Heart left ventricle (tissue), 16 donors: ENCODE measurements at regions of chr10 and their contacts with region 1.

Region 1: DNA sequence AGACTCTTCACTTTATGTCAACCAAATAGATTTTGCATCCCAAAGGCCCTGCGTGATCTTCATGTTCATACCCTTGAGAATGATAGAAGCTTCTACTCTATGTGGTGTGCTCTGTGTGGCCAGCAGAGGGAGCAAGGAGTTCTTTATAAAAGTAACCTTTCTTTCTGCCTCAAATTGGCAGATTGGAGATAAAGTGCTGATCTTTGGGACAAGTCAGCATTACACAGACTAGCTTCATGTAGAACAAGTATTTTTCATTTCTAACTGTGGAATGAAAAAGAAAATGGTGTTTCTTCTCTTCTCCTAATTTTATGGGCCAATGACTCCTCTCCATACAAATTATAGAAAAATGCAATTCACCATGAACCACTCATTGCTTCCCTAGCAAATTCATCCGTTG is 1214.1 kb downstream of the SORCS1 start:
- DNase-seq: peak in 3 of 5 donors; percentile 23 to 39 (median 29)
- ATAC-seq: peak in 2 of 4 donors; percentile 60 to 62
- H3K4me3 ChIP-seq: no peak overlapping the region
- H3K27ac ChIP-seq: no peak overlapping the region
- H3K4me1 ChIP-seq: peaks cover 0 to 7% (median 0%) of the 10 kb centered on the region in 12 donors
- H3K27me3 ChIP-seq: no peaks in the 10 kb centered on the region
- CTCF ChIP-seq: peak; percentile 59 to 85 (median 74)
- POLR2A ChIP-seq: no peak

Region 2: DNA sequence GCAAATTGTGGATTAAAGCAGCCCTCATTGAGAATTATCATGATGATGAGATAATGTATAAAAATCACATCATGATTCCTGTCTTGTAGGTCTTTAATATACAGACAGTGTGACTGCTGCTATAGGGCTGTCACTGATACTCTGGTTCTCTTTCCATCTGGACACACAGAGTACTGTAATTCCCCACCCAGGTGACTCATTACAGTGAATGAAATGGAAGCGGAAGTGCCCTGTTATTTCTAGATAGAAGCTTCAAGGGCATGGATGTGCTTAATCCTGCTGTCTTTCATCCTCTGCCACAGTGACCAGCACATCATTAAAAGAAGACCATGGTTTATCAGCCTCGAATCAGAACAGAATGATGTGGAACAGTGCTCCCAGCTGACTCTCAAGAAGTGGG is 75.4 kb before region 1 on chr10:
- intact Hi-C with region 1: no loop called
- DNase-seq: no peak
- ATAC-seq: no peak
- H3K4me3 ChIP-seq: no peak overlapping the region
- H3K27ac ChIP-seq: no peak overlapping the region
- H3K4me1 ChIP-seq: no peaks in the 10 kb centered on the region
- H3K27me3 ChIP-seq: no peaks in the 10 kb centered on the region
- CTCF ChIP-seq: no peak
- POLR2A ChIP-seq: no peak

Region 3: DNA sequence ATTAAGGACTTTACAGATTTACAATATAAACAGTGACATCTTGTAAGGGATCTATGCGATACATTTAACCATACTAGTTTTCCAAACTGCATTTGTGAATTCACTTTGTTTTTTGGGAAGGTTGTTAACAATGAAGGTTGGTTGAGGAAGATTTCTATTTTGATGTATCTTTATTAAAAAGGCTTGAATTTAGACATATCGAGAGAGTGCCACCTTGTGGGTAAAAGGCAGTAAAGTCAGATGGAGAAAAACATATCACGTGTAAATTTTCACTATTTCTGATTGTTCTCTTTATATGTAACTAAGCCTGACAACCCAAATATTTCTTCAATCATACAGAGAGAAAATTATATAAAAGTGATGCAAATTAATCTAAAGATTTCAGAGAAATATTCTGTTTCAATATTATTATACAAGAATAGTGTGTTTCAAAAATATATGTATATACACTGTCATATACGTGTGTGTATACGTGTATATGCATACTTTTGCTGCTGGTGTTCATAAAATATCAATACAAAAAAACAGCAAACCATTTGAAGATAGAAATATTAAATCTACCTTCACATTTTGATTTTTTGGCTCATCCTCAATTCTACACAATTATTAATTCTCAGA is 225.5 kb after region 1 on chr10:
- intact Hi-C with region 1: loop called in 9 of 10 experiments (anchors 2 to 10 kb)
- DNase-seq: no peak
- ATAC-seq: no peak
- H3K4me3 ChIP-seq: no peak overlapping the region
- H3K27ac ChIP-seq: no peak overlapping the region
- H3K4me1 ChIP-seq: no peaks in the 10 kb centered on the region
- H3K27me3 ChIP-seq: no peaks in the 10 kb centered on the region
- CTCF ChIP-seq: peak in 11 of 12 donors; percentile 16 to 59 (median 35)
- POLR2A ChIP-seq: no peak

Region 4: DNA sequence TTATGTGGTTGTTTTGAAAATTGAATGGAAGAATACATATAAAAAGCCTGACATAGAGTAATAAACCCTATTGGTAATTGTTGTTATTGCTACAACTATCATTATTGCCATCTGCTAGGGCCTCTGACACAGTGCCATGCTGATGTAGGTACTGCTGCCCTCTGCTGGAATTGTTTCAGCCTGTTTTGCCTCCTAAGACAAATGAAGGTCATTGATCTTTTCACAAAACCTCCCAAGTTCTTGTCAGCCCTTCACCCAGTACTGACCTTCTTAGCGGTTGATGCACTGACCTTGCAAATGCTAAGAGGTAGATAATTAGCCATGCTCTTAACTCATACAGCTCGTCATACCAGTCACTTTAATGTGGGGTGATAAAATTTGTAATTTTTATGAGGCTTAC is 238.9 kb after region 1 on chr10:
- intact Hi-C with region 1: loop called in 1 of 10 experiments (anchors 10 kb)
- DNase-seq: no peak
- ATAC-seq: peak in 1 of 4 donors; percentile 27
- H3K4me3 ChIP-seq: no peak overlapping the region
- H3K27ac ChIP-seq: no peak overlapping the region
- H3K4me1 ChIP-seq: no peaks in the 10 kb centered on the region
- H3K27me3 ChIP-seq: no peaks in the 10 kb centered on the region
- CTCF ChIP-seq: peak in 9 of 12 donors; percentile 8 to 43 (median 28)
- POLR2A ChIP-seq: no peak

Region 5: DNA sequence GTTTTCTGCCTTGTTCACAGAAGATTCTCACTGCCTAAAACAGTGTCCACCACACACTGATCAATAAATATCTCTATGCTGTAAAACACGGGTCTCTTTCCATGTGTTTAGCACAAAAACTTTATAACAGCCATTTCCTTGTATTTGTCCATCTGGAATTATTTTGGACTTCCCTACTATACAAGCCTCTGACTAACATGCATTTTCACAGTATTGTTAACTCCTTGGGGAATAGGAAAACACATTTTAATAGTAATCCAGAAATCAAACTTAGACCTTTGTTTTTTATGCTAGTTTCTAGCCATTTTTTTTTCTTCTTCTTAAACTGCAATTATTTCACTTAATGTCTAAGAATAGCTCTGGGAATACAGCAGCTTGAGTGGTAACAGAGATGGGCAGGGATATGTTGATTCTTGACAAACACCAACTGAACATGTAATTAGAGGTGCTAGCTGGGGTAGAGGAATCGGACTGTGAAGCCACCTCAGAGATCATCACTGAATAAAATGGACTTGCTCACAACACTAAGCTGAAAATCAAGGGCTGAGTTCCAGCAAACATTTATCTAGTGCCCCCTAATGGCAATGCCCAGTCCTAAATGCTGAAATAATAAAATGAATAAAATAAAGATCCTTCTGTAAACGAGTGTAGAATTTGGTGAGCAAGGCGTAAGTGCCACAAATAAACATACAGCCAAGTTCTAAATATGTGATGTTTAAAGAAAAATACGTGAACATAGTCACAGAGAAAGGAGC is 621.0 kb after region 1 on chr10:
- intact Hi-C with region 1: loop called in 2 of 10 experiments (anchors 5 to 10 kb)
- DNase-seq: no peak
- ATAC-seq: no peak
- H3K4me3 ChIP-seq: no peak overlapping the region
- H3K27ac ChIP-seq: no peak overlapping the region
- H3K4me1 ChIP-seq: no peaks in the 10 kb centered on the region
- H3K27me3 ChIP-seq: peaks cover 0 to 4% (median 0%) of the 10 kb centered on the region in 9 donors
- CTCF ChIP-seq: peak; percentile 24 to 59 (median 43)
- POLR2A ChIP-seq: no peak

Region 6: DNA sequence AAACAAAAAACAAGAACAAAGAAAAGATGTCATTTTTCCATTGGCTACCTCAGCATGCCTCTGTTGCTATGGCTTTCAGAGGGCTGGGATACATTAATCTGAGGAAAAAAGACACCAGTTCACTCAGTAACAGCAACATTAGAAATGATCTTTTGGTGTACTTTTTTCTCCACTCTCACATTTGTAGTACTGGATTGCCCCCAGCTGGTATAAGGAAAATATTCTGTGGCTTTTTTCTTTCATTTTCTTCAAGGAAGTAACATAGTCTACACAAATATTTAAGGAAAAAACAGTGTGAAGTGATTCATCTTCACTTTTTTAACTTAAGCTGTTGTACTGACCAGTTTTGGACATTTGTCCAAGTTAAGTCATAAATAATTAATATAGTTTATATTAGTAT is 731.8 kb after region 1 on chr10:
- intact Hi-C with region 1: loop called in 1 of 10 experiments (anchors 5 kb)
- DNase-seq: no peak
- ATAC-seq: no peak
- H3K4me3 ChIP-seq: no peak overlapping the region
- H3K27ac ChIP-seq: no peak overlapping the region
- H3K4me1 ChIP-seq: peaks cover 0 to 7% (median 0%) of the 10 kb centered on the region in 12 donors
- H3K27me3 ChIP-seq: no peaks in the 10 kb centered on the region
- CTCF ChIP-seq: peak in 7 of 12 donors; percentile 17 to 41 (median 31)
- POLR2A ChIP-seq: no peak